ENCODE measurements at regions of chr4 and their contacts with region 1.

Region 1: DNA sequence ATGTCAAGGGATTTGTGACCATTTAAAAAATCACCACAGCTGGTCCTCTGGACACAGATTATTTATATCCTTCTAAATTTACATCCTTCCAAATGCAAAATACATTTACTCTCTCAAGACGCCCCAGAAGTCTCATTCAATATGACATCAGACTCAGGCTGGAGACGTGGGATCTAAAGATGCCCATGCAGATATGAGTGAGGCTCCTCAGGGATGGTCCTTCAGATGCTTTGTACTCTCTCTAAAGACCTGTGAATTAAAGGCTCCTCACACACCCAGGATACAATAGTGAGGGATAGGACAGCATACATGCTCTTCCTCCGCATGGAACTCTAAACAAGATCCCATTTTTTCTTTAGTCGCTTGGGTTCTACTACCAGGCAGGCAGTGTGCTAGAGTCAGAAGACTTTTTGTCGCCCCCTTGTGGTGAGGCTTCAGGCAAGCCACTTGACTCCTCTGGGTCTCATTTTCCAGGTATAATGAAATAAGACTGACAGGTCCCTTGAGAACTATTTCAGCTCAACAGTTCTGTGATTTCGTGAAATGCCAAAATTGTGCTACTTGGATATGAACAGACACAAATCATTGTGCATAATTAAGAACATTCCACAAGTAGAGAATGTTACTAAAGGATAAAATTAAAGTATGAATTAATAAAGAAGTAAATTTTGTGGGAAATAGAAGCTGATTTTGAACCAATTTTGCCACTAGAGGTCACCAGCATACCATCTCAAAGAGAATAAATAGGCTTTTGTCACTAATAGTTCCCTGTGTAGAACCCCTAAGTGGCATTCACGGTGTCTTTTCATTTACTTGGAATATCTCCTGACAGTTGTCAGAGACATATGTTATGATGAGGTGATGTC is 13.7 kb upstream of the SCOC start:
- DNase-seq: peak; percentile 53 to 90 (median 80)

Region 2: GRCh38 chr4:140609548-140610425 is 250.0 kb after region 1 on chr4:
- intact Hi-C with region 1: loop called (anchors 5 kb)
- DNase-seq: peak in 13 of 42 donors; percentile 4 to 48 (median 20)

Region 3: DNA sequence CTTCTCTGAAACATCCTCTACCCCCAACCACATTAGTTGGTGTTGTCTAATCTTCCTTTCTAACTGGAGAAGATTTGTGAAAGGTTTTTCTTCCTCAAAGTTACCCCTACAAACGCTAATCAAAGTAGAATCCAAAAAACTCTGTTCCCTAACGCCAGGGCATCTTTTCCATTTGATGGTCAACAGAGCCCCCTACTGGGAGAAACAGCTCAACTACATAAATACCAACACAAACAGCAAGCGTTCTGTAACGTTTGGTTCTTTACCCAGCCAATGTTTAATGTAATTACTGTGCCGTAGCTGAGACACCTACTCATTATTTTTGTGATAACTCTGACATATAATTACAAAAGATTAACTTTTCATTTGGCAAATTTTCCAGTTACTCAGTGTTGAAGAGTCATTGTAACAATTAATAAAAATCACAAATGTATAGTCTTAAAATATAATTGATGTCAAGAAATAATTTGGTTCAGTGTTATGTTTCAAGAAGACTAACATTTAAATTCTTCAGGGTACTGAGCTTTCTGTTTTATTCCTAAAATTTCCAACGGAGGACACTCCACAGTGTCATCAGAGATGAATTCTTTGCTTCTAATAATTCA is 491.3 kb after region 1 on chr4:
- intact Hi-C with region 1: loop called (anchors 10 kb)
- DNase-seq: peak in 25 of 42 donors; percentile 9 to 80 (median 54)

Measured in head of caudate nucleus (tissue), 42 donors.